Transverse colon (tissue), 4 donors: ENCODE measurements at regions of chr12 and their contacts with region 1.

Region 1: DNA sequence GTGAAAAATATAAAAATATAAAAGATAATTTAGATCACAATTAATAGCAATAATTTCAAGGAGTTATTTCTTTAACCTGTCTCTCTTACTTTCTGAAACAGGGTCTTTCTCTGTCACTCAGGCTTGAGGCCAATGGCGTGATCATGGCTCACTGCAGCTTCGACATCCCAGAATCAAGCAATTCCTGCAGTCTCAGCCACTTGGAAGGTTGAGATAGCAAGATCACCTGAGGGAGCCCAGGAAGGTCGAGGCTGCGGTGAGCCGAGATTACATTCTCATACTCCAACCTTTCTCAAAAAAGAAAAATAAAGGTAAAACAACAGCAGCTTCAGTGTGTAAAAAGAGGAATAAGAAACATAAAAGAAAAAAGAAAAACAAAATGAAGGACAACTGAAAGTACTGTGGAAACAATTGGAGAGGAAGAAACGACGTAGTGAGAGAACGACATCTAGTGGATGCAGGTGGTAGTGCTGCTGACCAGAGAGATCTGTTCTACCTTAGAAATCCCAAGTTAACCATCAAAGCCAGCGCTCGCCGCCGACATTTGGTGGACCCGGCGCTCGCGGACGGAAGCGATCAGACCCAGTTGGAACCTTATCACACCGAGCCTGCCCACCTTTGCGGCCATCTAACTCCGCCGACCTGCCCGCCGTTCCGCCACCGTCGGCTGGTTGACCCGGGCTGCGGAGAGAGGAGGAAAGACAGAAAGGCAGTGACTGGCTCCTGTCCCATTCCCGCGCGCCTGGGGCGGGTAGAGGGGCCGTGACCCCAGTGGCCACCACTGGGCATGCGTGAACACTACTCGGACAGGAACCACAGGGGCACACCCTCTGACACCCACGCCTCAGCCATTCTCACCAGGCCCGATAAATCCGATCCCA is 196.1 kb downstream of the ALG10 start:
- DNase-seq: peak; percentile 52
- H3K4me3 ChIP-seq: peak overlapping the region in 3 of 4 donors; percentile 14 to 27 (median 17)
- H3K27ac ChIP-seq: no peak overlapping the region
- H3K4me1 ChIP-seq: peaks cover 0 to 6% (median 0%) of the 10 kb centered on the region in 4 donors
- H3K27me3 ChIP-seq: no peaks in the 10 kb centered on the region
- CTCF ChIP-seq: peak; percentile 73 to 94 (median 84)
- EP300 ChIP-seq: no peak
- POLR2A ChIP-seq: no peak

Region 2: GRCh38 chr12:34107781-34108404 is 110.5 kb before region 1 on chr12:
- in situ Hi-C with region 1: loop called in 1 of 4 experiments (anchors 25 kb)
- intact Hi-C with region 1: no loop called
- DNase-seq: no peak
- H3K4me3 ChIP-seq: no peak overlapping the region
- H3K27ac ChIP-seq: no peak overlapping the region
- H3K4me1 ChIP-seq: no peaks in the 10 kb centered on the region
- H3K27me3 ChIP-seq: peaks cover 20% of the 10 kb centered on the region
- CTCF ChIP-seq: no peak
- EP300 ChIP-seq: no peak
- POLR2A ChIP-seq: no peak

Region 3: DNA sequence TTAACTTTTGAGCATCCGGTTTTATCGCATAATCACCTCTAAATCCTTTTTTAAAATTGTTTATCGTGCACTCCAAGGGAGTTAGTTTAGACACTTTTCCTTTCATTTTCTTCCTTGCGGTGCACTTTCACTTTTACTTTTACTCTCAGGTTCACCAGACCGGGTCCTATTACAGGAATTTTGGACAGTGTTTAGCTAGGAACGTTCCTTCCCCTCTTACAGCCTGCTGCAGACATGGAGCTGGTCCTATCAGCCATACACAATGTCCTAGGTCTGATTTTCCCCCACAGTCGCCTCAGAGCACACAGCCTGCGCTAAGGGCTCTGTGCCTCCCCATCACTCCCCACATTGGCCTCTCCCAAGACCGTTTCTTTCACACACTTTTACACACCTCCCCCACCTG is 92.2 kb before region 1 on chr12:
- in situ Hi-C with region 1: loop called in 2 of 4 experiments (anchors 10 to 25 kb)
- intact Hi-C with region 1: loop called (anchors 5 kb)
- DNase-seq: no peak
- H3K4me3 ChIP-seq: peak overlapping the region in 1 of 4 donors; percentile 13
- H3K27ac ChIP-seq: no peak overlapping the region
- H3K4me1 ChIP-seq: no peaks in the 10 kb centered on the region
- H3K27me3 ChIP-seq: no peaks in the 10 kb centered on the region
- CTCF ChIP-seq: no peak
- EP300 ChIP-seq: no peak
- POLR2A ChIP-seq: no peak

Region 4: GRCh38 chr12:34335819-34336262 is 117.4 kb after region 1 on chr12:
- in situ Hi-C with region 1: no loop called
- intact Hi-C with region 1: no loop called
- DNase-seq: no peak
- H3K4me3 ChIP-seq: no peak overlapping the region
- H3K27ac ChIP-seq: no peak overlapping the region
- H3K4me1 ChIP-seq: no peaks in the 10 kb centered on the region
- H3K27me3 ChIP-seq: no peaks in the 10 kb centered on the region
- CTCF ChIP-seq: no peak
- EP300 ChIP-seq: no peak
- POLR2A ChIP-seq: no peak